ENCODE measurements at regions of chr1 and their contacts with region 1.

Region 1: GRCh38 chr1:44826375-44827196 is 16.5 kb downstream of the PTCH2 start:
- DNase-seq: no peak
- H3K4me3 ChIP-seq: no peak overlapping the region
- H3K27ac ChIP-seq: no peak overlapping the region
- H3K4me1 ChIP-seq: peaks cover 0 to 9% (median 2%) of the 10 kb centered on the region in 4 experiments; a peak in 6 of 7 replicates
- H3K27me3 ChIP-seq: no peaks in the 10 kb centered on the region
- CTCF ChIP-seq: no peak
- EP300 ChIP-seq: no peak
- POLR2A ChIP-seq: no peak
- RAD21 ChIP-seq: no peak

Region 2: DNA sequence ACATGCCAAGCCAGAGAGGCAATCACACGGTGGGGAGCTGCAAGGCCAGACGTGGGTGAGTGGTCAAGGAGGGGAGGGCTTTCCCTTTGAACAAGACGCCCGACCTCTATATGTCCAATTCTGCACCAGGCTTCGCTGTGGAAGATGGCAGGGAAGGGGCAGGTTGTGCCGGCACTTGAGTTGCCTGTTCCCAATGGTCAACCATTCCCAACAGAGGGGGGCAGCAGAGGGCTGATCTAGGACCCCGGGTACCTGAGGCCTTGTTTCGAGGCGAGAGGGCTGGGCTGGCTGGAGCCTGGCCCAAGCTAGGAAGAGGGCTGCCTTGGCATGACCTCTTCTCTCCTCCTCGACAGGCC is 217.2 kb before region 1 on chr1:
- CTCF ChIA-PET with region 1: no interaction called
- POLR2A ChIA-PET with region 1: no interaction called
- DNase-seq: peak; percentile 67 to 93
- H3K4me3 ChIP-seq: no peak overlapping the region
- H3K27ac ChIP-seq: no peak overlapping the region
- H3K4me1 ChIP-seq: peaks cover 2 to 18% (median 11%) of the 10 kb centered on the region in 4 experiments; a peak in 6 of 7 replicates
- H3K27me3 ChIP-seq: no peaks in the 10 kb centered on the region
- CTCF ChIP-seq: peak; percentile 78 to 86 (median 84)
- EP300 ChIP-seq: no peak
- POLR2A ChIP-seq: no peak
- RAD21 ChIP-seq: peak; percentile 71 to 83

Region 3: GRCh38 chr1:44792783-44793714 is 33.5 kb before region 1 on chr1:
- CTCF ChIA-PET with region 1: interaction called, 19 read pairs
- POLR2A ChIA-PET with region 1: interaction called, 547 read pairs
- DNase-seq: no peak
- H3K4me3 ChIP-seq: no peak overlapping the region
- H3K27ac ChIP-seq: no peak overlapping the region; the same call in 1 of the 2 replicates
- H3K4me1 ChIP-seq: peaks cover 0 to 5% (median 5%) of the 10 kb centered on the region in 4 experiments
- H3K27me3 ChIP-seq: no peaks in the 10 kb centered on the region
- CTCF ChIP-seq: no peak
- EP300 ChIP-seq: no peak
- POLR2A ChIP-seq: no peak
- RAD21 ChIP-seq: no peak

Measured in H1 (cell line).